CD8-positive, alpha-beta T cell (primary cell): ENCODE measurements at regions of chr1 and their contacts with region 1.

Region 1: GRCh38 chr1:22025368-22026155 is 24.1 kb downstream of the CELA3A start:
- DNase-seq: peak; percentile 69 to 95 (median 90)
- ATAC-seq: peak; percentile 65
- H3K4me3 ChIP-seq: peak overlapping the region; percentile 97 to 99
- H3K4me3 Mint-ChIP-seq: peak overlapping the region; percentile 95
- H3K27ac ChIP-seq: peak overlapping the region; percentile 99
- H3K27ac Mint-ChIP-seq: peak overlapping the region; percentile 98
- H3K4me1 ChIP-seq: peaks cover 37% of the 10 kb centered on the region
- H3K4me1 Mint-ChIP-seq: peaks cover 60% of the 10 kb centered on the region
- H3K27me3 ChIP-seq: no peaks in the 10 kb centered on the region
- H3K27me3 Mint-ChIP-seq: no peaks in the 10 kb centered on the region
- CTCF ChIP-seq: no peak

Region 2: GRCh38 chr1:21703318-21703963 is 322.1 kb before region 1 on chr1:
- CTCF ChIA-PET with region 1: interaction called, 4 read pairs
- POLR2A ChIA-PET with region 1: no interaction called
- intact Hi-C with region 1: loop called in 1 of 2 experiments (anchors 5 kb)
- DNase-seq: peak in 2 of 9 experiments; percentile 5 to 19
- ATAC-seq: no peak
- H3K4me3 ChIP-seq: no peak overlapping the region
- H3K4me3 Mint-ChIP-seq: no peak overlapping the region
- H3K27ac ChIP-seq: no peak overlapping the region
- H3K27ac Mint-ChIP-seq: no peak overlapping the region
- H3K4me1 ChIP-seq: no peaks in the 10 kb centered on the region
- H3K4me1 Mint-ChIP-seq: peaks cover 2% of the 10 kb centered on the region
- H3K27me3 ChIP-seq: no peaks in the 10 kb centered on the region
- H3K27me3 Mint-ChIP-seq: no peaks in the 10 kb centered on the region
- CTCF ChIP-seq: no peak

Region 3: GRCh38 chr1:21963477-21964217 is 61.9 kb before region 1 on chr1:
- CTCF ChIA-PET with region 1: interaction called, 6 read pairs
- POLR2A ChIA-PET with region 1: interaction called, 3 read pairs
- intact Hi-C with region 1: loop called in 1 of 2 experiments (anchors 5 kb)
- DNase-seq: peak; percentile 69 to 91 (median 79)
- ATAC-seq: peak; percentile 97
- H3K4me3 ChIP-seq: no peak overlapping the region
- H3K4me3 Mint-ChIP-seq: no peak overlapping the region
- H3K27ac ChIP-seq: no peak overlapping the region
- H3K27ac Mint-ChIP-seq: no peak overlapping the region
- H3K4me1 ChIP-seq: peaks cover 8% of the 10 kb centered on the region
- H3K4me1 Mint-ChIP-seq: peaks cover 7% of the 10 kb centered on the region
- H3K27me3 ChIP-seq: no peaks in the 10 kb centered on the region
- H3K27me3 Mint-ChIP-seq: no peaks in the 10 kb centered on the region
- CTCF ChIP-seq: peak; percentile 90

Region 4: DNA sequence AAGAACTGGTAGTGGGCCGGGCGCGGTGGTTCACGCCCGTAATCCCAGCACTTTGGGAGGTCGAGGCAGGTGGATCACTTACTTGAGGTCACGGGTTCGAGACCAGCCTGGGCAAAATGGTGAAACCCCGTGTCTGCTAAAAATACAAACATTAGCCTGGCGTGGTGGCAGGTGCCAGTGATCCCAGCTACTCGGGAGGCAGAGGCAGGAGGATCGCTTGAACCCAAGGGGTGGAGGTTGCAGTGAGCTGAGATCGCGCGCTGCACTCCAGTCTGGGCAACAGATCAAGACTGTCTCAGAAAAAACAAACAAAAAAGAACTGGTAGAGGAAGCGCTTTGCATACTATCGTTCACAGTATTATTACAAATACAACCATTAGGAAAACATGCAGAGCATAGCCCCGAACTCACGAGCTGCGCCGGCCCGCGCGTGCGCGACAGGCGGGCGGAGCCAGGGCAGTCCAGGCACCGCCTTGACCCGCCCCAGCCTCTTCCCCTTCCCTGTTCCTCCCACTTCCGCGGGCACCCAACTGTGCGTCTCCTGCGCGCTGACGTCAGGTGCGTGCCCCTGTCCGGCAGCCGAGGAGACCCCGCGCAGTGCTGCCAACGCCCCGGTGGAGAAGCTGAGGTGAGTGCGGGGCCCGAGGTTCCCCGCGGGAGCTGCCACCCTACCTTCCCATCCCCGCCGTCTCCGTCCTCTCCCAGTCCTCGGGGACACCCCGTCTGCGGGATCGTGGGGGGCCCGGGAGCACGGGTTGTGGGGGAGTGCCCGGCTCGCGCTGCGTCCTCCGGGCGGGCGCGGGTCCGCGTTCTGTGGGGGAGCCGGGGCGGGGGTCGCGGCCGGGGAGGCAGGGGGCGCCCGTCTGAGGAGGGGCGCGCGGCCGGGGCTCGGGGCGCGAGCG is 26.8 kb after region 1 on chr1 and contains the start of gene CDC42:
- CTCF ChIA-PET with region 1: interaction called, 42 read pairs
- POLR2A ChIA-PET with region 1: interaction called, 177 read pairs
- intact Hi-C with region 1: loop called (anchors 1 kb)
- DNase-seq: peak; percentile 95 to 98 (median 96)
- ATAC-seq: peak; percentile 90
- H3K4me3 ChIP-seq: peak within 1 kb of the TSS; percentile 75 to 88
- H3K4me3 Mint-ChIP-seq: peak within 1 kb of the TSS; percentile 98
- H3K27ac ChIP-seq: peak within 1 kb of the TSS; percentile 98 to 99
- H3K27ac Mint-ChIP-seq: peak within 1 kb of the TSS; percentile 99
- H3K4me1 ChIP-seq: peaks cover 54% of the 10 kb centered on the region
- H3K4me1 Mint-ChIP-seq: peaks cover 60% of the 10 kb centered on the region
- H3K27me3 ChIP-seq: no peaks in the 10 kb centered on the region
- H3K27me3 Mint-ChIP-seq: no peaks in the 10 kb centered on the region
- CTCF ChIP-seq: no peak
- total RNA-seq, gene CDC42: 327 to 377 TPM

Region 5: GRCh38 chr1:22089787-22090186 is 64.2 kb after region 1 on chr1:
- CTCF ChIA-PET with region 1: interaction called, 22 read pairs
- POLR2A ChIA-PET with region 1: interaction called, 33 read pairs
- intact Hi-C with region 1: loop called in 1 of 2 experiments (anchors 5 kb)
- DNase-seq: peak in 1 of 9 experiments; percentile 33
- ATAC-seq: no peak
- H3K4me3 ChIP-seq: peak overlapping the region in 1 of 2 experiments; percentile 13
- H3K4me3 Mint-ChIP-seq: peak overlapping the region; percentile 71
- H3K27ac ChIP-seq: peak overlapping the region; percentile 6 to 46
- H3K27ac Mint-ChIP-seq: peak overlapping the region; percentile 76
- H3K4me1 ChIP-seq: peaks cover 67% of the 10 kb centered on the region
- H3K4me1 Mint-ChIP-seq: peaks cover 87% of the 10 kb centered on the region
- H3K27me3 ChIP-seq: no peaks in the 10 kb centered on the region
- H3K27me3 Mint-ChIP-seq: no peaks in the 10 kb centered on the region
- CTCF ChIP-seq: no peak

Region 6: GRCh38 chr1:22105611-22106207 is 80.1 kb after region 1 on chr1:
- CTCF ChIA-PET with region 1: interaction called, 9 read pairs
- POLR2A ChIA-PET with region 1: interaction called, 17 read pairs
- intact Hi-C with region 1: no loop called
- DNase-seq: peak in 5 of 9 experiments; percentile 29 to 74 (median 49)
- ATAC-seq: peak; percentile 73
- H3K4me3 ChIP-seq: no peak overlapping the region
- H3K4me3 Mint-ChIP-seq: peak overlapping the region; percentile 16
- H3K27ac ChIP-seq: peak overlapping the region; percentile 21 to 58
- H3K27ac Mint-ChIP-seq: peak overlapping the region; percentile 81
- H3K4me1 ChIP-seq: peaks cover 41% of the 10 kb centered on the region
- H3K4me1 Mint-ChIP-seq: peaks cover 67% of the 10 kb centered on the region
- H3K27me3 ChIP-seq: no peaks in the 10 kb centered on the region
- H3K27me3 Mint-ChIP-seq: no peaks in the 10 kb centered on the region
- CTCF ChIP-seq: peak; percentile 91

Region 7: DNA sequence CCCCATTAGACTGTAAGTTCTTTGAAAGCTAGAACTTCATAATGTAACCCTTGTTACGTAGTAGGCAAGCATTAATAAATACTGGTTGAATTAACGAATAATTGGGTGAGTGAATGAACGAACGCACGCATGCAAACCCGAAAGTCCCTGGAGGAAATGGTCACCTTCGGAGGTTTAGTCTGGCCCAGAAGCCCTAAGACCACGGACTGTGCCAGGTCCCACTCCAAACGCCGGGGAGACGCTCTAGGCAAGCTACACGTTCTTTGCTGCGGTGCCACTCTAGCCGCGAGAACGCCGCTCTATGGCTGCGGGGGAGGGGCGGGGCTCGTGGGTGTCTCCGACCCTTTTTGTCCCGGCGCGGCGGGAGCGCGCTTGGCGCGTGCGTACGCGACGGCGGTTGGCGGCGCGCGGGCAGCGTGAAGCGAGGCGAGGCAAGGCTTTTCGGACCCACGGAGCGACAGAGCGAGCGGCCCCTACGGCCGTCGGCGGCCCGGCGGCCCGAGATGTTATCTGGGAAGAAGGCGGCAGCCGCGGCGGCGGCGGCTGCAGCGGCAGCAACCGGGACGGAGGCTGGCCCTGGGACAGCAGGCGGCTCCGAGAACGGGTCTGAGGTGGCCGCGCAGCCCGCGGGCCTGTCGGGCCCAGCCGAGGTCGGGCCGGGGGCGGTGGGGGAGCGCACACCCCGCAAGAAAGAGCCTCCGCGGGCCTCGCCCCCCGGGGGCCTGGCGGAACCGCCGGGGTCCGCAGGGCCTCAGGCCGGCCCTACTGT is 993.7 kb after region 1 on chr1 and contains the start of gene KDM1A:
- CTCF ChIA-PET with region 1: no interaction called
- POLR2A ChIA-PET with region 1: no interaction called
- intact Hi-C with region 1: loop called in 1 of 2 experiments (anchors 10 kb)
- DNase-seq: peak; percentile 89 to 98 (median 95)
- ATAC-seq: peak; percentile 98
- H3K4me3 ChIP-seq: peak within 1 kb of the TSS; percentile 57 to 90
- H3K4me3 Mint-ChIP-seq: peak within 1 kb of the TSS; percentile 99
- H3K27ac ChIP-seq: peak within 1 kb of the TSS; percentile 41 to 69
- H3K27ac Mint-ChIP-seq: peak within 1 kb of the TSS; percentile 93
- H3K4me1 ChIP-seq: peaks cover 14% of the 10 kb centered on the region
- H3K4me1 Mint-ChIP-seq: peaks cover 46% of the 10 kb centered on the region
- H3K27me3 ChIP-seq: no peaks in the 10 kb centered on the region
- H3K27me3 Mint-ChIP-seq: no peaks in the 10 kb centered on the region
- CTCF ChIP-seq: no peak
- total RNA-seq, gene KDM1A: 42.2 to 46.2 TPM